GM12878 (cell line): ENCODE measurements at regions of chr5 and their contacts with region 1.

Region 1: GRCh38 chr5:178279725-178280438 is 47.3 kb upstream of the PHYKPL start:
- DNase-seq: no peak
- ATAC-seq: peak; percentile 99
- H3K4me3 ChIP-seq: no peak overlapping the region
- H3K27ac ChIP-seq: no peak overlapping the region
- H3K4me1 ChIP-seq: no peaks in the 10 kb centered on the region
- H3K27me3 ChIP-seq: no peaks in the 10 kb centered on the region
- CTCF ChIP-seq: peak; percentile 84 to 94 (median 93)
- EP300 ChIP-seq: no peak
- POLR2A ChIP-seq: no peak
- RAD21 ChIP-seq: peak; percentile 79

Region 2: DNA sequence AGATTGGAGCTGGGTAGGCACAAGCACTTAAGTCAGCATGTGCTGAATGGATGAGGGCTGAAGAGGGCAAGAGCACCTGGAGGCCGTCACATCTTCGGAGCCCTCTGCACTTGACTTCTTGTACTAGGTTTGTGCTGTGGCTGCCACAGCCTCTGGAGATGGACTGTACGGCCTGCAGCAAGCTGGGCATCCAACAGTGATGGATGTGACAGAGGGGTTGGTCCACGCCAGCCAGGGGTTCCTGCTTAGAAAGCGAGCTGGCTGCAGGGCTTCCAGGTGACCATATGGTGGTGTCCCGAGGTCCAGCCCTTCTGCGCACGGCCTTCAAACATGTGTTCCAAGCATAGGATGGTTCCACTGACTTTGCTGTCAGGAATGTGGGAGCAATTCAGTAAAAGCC is 17.9 kb after region 1 on chr5:
- CTCF ChIA-PET with region 1: no interaction called
- POLR2A ChIA-PET with region 1: no interaction called
- RAD21 ChIA-PET with region 1: no interaction called
- SMC1A ChIA-PET with region 1: no interaction called
- in situ Hi-C with region 1: no loop called
- intact Hi-C with region 1: no loop called
- DNase-seq: no peak
- ATAC-seq: no peak
- H3K4me3 ChIP-seq: no peak overlapping the region
- H3K27ac ChIP-seq: no peak overlapping the region
- H3K4me1 ChIP-seq: no peaks in the 10 kb centered on the region; the same call in 1 of the 2 replicates
- H3K27me3 ChIP-seq: no peaks in the 10 kb centered on the region; a peak in 2 of 4 replicates
- CTCF ChIP-seq: no peak
- EP300 ChIP-seq: no peak
- POLR2A ChIP-seq: no peak
- RAD21 ChIP-seq: no peak

Region 3: GRCh38 chr5:178324481-178325310 is 44.8 kb after region 1 on chr5:
- CTCF ChIA-PET with region 1: no interaction called
- POLR2A ChIA-PET with region 1: no interaction called
- RAD21 ChIA-PET with region 1: no interaction called
- SMC1A ChIA-PET with region 1: no interaction called
- in situ Hi-C with region 1: no loop called
- intact Hi-C with region 1: loop called (anchors 5 kb)
- DNase-seq: no peak
- ATAC-seq: peak; percentile 87
- H3K4me3 ChIP-seq: no peak overlapping the region
- H3K27ac ChIP-seq: peak overlapping the region; percentile 72
- H3K4me1 ChIP-seq: peaks cover 11% of the 10 kb centered on the region
- H3K27me3 ChIP-seq: no peaks in the 10 kb centered on the region
- CTCF ChIP-seq: no peak
- EP300 ChIP-seq: 0 out of 4 replicates have a peak, but pooled peaks of 1 of the 2 experiments have one; percentile 45
- POLR2A ChIP-seq: no peak
- RAD21 ChIP-seq: no peak

Region 4: GRCh38 chr5:178388386-178389025 is 108.6 kb after region 1 on chr5:
- CTCF ChIA-PET with region 1: no interaction called
- POLR2A ChIA-PET with region 1: no interaction called
- RAD21 ChIA-PET with region 1: no interaction called
- SMC1A ChIA-PET with region 1: no interaction called
- in situ Hi-C with region 1: no loop called
- intact Hi-C with region 1: no loop called
- DNase-seq: no peak
- ATAC-seq: no peak
- H3K4me3 ChIP-seq: no peak overlapping the region
- H3K27ac ChIP-seq: no peak overlapping the region
- H3K4me1 ChIP-seq: no peaks in the 10 kb centered on the region
- H3K27me3 ChIP-seq: no peaks in the 10 kb centered on the region; a peak in 2 of 4 replicates
- CTCF ChIP-seq: no peak
- EP300 ChIP-seq: no peak
- POLR2A ChIP-seq: no peak
- RAD21 ChIP-seq: no peak

Region 5: GRCh38 chr5:178453224-178453623 is 173.3 kb after region 1 on chr5:
- CTCF ChIA-PET with region 1: no interaction called
- POLR2A ChIA-PET with region 1: no interaction called
- RAD21 ChIA-PET with region 1: no interaction called
- SMC1A ChIA-PET with region 1: no interaction called
- in situ Hi-C with region 1: no loop called
- intact Hi-C with region 1: loop called (anchors 10 kb)
- DNase-seq: no peak
- ATAC-seq: no peak
- H3K4me3 ChIP-seq: no peak overlapping the region
- H3K27ac ChIP-seq: no peak overlapping the region
- H3K4me1 ChIP-seq: no peaks in the 10 kb centered on the region
- H3K27me3 ChIP-seq: no peaks in the 10 kb centered on the region
- CTCF ChIP-seq: no peak
- EP300 ChIP-seq: no peak
- POLR2A ChIP-seq: no peak
- RAD21 ChIP-seq: no peak

Region 6: GRCh38 chr5:178551059-178551458 is 271.2 kb after region 1 on chr5:
- CTCF ChIA-PET with region 1: interaction called, 15 read pairs
- POLR2A ChIA-PET with region 1: no interaction called
- RAD21 ChIA-PET with region 1: no interaction called
- SMC1A ChIA-PET with region 1: interaction called, 3 read pairs
- in situ Hi-C with region 1: loop called (anchors 5 kb)
- intact Hi-C with region 1: loop called (anchors 1 kb)
- DNase-seq: no peak
- ATAC-seq: no peak
- H3K4me3 ChIP-seq: no peak overlapping the region
- H3K27ac ChIP-seq: no peak overlapping the region
- H3K4me1 ChIP-seq: no peaks in the 10 kb centered on the region
- H3K27me3 ChIP-seq: no peaks in the 10 kb centered on the region
- CTCF ChIP-seq: peak in 1 of 3 experiments; percentile 26; a peak in 3 of 6 replicates
- EP300 ChIP-seq: no peak
- POLR2A ChIP-seq: no peak
- RAD21 ChIP-seq: peak; percentile 23; the same call in 1 of the 2 replicates

Region 7: DNA sequence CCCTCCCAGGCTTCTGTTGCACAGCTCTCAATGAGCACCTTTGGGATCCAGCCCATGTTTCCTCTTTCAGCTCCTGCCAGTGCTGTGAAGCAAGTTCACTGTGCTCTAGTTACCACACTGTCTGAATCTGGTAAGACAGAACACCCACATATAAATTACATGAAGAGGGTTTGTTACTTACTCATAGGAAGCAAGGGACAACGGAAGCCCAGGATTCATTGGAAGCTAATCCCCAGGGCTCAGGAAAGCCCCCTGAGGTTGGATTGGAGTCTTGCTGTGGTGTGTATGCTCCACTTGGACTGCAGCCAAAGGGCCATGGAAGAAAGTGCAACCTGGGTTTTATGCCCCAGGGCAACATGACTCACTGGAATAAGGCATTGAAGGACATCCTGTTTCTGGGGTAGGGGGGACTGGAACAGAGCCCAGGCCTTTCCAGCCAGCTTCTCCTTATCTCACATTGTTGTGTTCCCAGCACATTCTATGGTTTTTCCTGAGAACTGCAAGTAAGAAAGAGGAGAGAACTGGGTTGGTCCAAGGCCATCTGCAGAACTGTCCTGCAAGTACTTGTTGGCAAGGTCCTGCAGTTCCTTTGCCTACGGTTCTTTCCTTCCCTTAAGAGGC is 362.6 kb after region 1 on chr5:
- CTCF ChIA-PET with region 1: no interaction called
- POLR2A ChIA-PET with region 1: no interaction called
- RAD21 ChIA-PET with region 1: no interaction called
- SMC1A ChIA-PET with region 1: no interaction called
- in situ Hi-C with region 1: no loop called
- intact Hi-C with region 1: loop called (anchors 5 kb)
- DNase-seq: no peak
- ATAC-seq: no peak
- H3K4me3 ChIP-seq: no peak overlapping the region
- H3K27ac ChIP-seq: no peak overlapping the region
- H3K4me1 ChIP-seq: no peaks in the 10 kb centered on the region
- H3K27me3 ChIP-seq: no peaks in the 10 kb centered on the region
- CTCF ChIP-seq: no peak
- EP300 ChIP-seq: no peak
- POLR2A ChIP-seq: no peak
- RAD21 ChIP-seq: no peak

Region 8: GRCh38 chr5:178732281-178732680 is 452.4 kb after region 1 on chr5:
- CTCF ChIA-PET with region 1: interaction called, 3 read pairs
- POLR2A ChIA-PET with region 1: no interaction called
- RAD21 ChIA-PET with region 1: no interaction called
- SMC1A ChIA-PET with region 1: no interaction called
- in situ Hi-C with region 1: no loop called
- intact Hi-C with region 1: loop called (anchors 10 kb)
- DNase-seq: no peak
- ATAC-seq: no peak
- H3K4me3 ChIP-seq: no peak overlapping the region
- H3K27ac ChIP-seq: no peak overlapping the region
- H3K4me1 ChIP-seq: no peaks in the 10 kb centered on the region
- H3K27me3 ChIP-seq: no peaks in the 10 kb centered on the region
- CTCF ChIP-seq: no peak
- EP300 ChIP-seq: no peak
- POLR2A ChIP-seq: no peak
- RAD21 ChIP-seq: no peak

Region 9: DNA sequence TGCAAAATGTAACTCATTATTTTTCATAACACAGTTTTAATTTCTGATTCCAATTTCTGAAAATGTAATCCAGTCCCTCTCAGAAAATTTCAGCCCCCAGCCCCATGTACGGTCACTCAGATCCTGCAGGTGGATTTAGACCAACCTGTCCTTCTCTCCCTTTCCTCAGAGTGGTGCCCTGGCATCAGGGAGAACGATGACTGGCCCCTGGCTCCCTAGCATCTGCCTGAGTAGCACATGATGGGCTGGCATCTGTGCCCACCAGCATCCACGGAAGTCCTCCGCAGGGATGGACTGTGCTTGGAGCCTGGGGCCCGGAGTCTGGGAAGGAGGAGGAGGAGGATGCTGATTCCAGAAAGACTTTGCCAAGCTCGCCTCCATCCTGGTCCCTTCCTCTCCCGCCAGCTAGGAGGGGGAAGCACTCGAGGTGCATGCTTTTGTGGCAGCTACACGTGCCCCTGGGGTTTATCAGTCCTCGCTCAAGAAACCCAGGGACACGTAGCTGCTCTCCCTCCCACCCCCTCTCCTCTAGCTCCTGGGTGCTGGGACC is 1216.1 kb after region 1 on chr5:
- CTCF ChIA-PET with region 1: interaction called, 5 read pairs
- POLR2A ChIA-PET with region 1: no interaction called
- RAD21 ChIA-PET with region 1: interaction called, 3 read pairs
- SMC1A ChIA-PET with region 1: interaction called, 9 read pairs
- in situ Hi-C with region 1: loop called (anchors 5 kb)
- intact Hi-C with region 1: loop called (anchors 1 kb)
- DNase-seq: no peak
- ATAC-seq: peak; percentile 54; the same call in 2 of the 3 replicates
- H3K4me3 ChIP-seq: no peak overlapping the region
- H3K27ac ChIP-seq: no peak overlapping the region
- H3K4me1 ChIP-seq: no peaks in the 10 kb centered on the region
- H3K27me3 ChIP-seq: no peaks in the 10 kb centered on the region
- CTCF ChIP-seq: peak in 1 of 3 experiments; percentile 43; a peak in 2 of 6 replicates
- EP300 ChIP-seq: no peak
- POLR2A ChIP-seq: no peak
- RAD21 ChIP-seq: peak; percentile 57